Mammary epithelial cell (primary cell): ENCODE measurements at regions of chr2 and their contacts with region 1.

Region 1: DNA sequence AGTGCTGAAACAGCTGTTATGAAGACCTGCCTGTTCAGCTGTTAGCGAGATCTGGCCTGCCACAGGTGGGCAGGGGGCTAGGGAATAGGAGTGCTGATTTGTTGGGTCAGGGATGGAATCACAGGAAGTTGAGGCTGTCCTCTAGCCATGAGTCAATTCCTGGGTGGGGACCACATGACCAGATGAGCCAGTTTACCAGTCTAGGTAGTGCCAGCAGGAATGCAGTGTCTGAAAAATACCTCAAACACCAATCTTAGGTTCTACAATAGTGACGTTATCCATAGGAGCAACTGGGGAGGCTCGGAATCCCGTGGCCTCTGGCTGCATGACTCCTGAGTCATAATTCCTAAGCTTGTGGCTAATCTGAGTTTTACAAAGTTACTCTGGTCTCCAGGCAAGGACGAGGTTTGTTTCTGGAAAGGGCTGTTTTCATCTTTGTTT is 44.9 kb downstream of the DYSF start:
- DNase-seq: peak; percentile 97
- H3K4me3 ChIP-seq: peak overlapping the region in 1 of 3 experiments; percentile 3
- H3K27ac ChIP-seq: peak overlapping the region; percentile 85
- H3K4me1 ChIP-seq: peaks cover 41% of the 10 kb centered on the region
- H3K27me3 ChIP-seq: no peaks in the 10 kb centered on the region
- CTCF ChIP-seq: no peak

Region 2: DNA sequence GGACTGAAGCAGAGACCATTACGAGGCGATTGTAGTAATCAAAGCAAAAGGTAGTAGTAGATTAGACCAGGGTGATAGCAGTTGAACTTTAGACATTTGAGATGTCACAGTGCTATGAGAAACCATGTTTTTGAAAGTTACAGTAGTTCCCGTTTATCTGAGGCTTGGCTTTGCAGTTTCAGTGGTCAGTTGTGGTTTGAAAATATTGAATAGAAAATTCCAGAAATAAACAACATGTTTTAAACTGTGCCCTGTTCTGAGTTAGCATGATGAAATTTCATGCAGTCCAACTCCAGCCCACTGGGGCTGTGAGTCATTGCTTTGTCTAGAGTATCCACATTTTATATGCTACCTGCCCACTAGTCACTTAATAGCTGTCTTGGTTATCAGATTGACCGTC is 119.2 kb before region 1 on chr2:
- CTCF ChIA-PET with region 1: no interaction called
- dilution Hi-C with region 1: no loop called
- in situ Hi-C with region 1: no loop called
- intact Hi-C with region 1: loop called (anchors 1 kb)
- DNase-seq: peak; percentile 76
- H3K4me3 ChIP-seq: no peak overlapping the region
- H3K27ac ChIP-seq: peak overlapping the region; percentile 56
- H3K4me1 ChIP-seq: peaks cover 9% of the 10 kb centered on the region
- H3K27me3 ChIP-seq: no peaks in the 10 kb centered on the region
- CTCF ChIP-seq: no peak

Region 3: DNA sequence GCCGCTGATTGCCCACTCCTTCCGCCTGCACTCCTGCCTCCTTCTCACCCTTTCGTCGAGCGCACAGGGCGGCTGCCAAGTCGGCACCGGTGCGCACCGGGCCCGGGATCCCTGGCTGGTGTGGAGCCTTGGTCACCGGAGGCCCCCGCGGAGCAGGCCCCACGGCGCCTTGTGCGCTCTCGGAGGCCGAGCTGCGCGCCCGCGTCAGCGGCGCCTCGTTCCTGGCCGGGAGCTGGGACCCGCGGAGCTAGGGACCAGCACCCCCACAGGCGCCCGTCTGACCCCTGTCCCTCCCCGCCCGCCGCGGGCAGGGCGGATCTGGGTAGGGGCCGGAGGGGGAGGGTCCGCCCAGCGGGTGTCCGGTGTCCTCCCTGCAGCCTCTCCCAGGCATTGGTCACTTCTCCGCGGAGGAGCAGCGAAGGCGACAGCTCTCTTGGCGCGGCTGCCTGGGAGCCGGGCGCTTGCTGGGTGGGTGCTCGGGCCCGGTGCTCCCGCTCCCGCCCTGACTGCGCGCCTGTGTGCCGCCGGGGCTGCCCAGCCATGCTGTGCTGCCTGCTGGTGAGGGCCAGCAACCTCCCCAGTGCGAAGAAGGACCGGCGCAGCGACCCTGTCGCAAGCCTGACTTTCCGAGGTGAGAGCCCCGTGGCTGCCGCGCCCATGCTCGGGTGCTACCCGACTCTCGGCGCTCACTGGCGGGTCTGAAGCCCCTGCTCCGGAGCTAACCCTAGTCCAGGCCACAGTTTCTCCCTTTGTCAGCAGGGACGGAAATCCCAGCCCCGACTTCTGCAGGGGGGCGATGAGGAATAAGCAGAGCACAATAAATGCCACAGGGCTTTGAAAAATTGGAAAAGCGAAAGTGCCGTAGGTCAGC is 31.7 kb before region 1 on chr2:
- CTCF ChIA-PET with region 1: no interaction called
- dilution Hi-C with region 1: no loop called
- in situ Hi-C with region 1: no loop called
- intact Hi-C with region 1: loop called (anchors 2 kb)
- DNase-seq: peak; percentile 41
- H3K4me3 ChIP-seq: peak overlapping the region; percentile 53 to 66 (median 62)
- H3K27ac ChIP-seq: no peak overlapping the region
- H3K4me1 ChIP-seq: peaks cover 16% of the 10 kb centered on the region
- H3K27me3 ChIP-seq: no peaks in the 10 kb centered on the region
- CTCF ChIP-seq: no peak